PC-3 (cell line): ENCODE measurements at regions of chr1 and their contacts with region 1.

Region 1: DNA sequence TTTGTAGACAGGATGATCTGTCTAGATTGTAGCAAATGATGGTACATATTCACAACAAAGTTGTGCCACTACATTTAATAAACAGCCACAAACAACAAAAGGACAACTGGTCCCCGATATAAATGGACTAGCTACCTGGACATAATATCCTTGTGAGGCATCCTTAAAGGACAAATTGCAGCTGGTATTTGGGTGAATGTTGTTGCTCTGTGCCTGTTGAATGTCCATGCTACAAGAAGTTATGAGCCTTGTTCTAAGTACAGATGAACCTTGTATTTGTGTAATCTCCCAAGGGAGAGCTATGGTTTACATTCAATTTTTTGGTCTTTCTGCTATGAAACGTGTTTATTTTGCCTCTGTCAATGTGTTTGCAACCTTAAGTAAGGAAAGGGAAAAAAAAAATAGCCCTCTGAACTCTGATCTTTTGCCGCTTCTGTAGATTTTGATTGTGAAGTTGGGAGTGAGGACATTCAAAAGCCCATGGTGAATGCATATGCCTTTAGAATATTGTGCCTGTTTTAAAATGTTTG is 26.5 kb downstream of the SFT2D2 start:
- DNase-seq: no peak
- ATAC-seq: no peak
- H3K4me3 ChIP-seq: no peak overlapping the region
- H3K27ac ChIP-seq: no peak overlapping the region
- H3K4me1 ChIP-seq: no peaks in the 10 kb centered on the region
- H3K27me3 ChIP-seq: no peaks in the 10 kb centered on the region
- CTCF ChIP-seq: no peak

Region 2: DNA sequence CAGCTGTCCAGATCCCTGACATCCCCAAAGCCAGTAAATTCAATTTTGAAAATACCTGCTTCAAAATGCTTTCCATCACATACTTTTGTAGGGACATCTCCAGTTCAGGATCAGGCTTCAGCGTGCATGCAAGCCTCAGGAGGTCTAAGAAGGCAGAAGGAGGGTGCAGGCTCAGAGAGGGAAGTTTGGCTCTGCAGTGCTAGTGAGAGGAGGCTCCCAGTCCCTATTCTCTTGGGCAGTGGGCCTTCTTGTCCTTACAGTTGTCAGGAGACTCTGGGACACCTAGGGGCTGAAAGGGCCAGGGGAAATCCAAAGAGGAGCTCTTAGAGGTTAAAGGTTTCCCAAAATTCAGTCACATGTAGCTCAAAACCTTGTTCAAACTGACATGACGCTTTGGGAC is 358.5 kb before region 1 on chr1:
- CTCF ChIA-PET with region 1: no interaction called
- POLR2A ChIA-PET with region 1: interaction called, 37 read pairs
- intact Hi-C with region 1: no loop called
- DNase-seq: no peak
- ATAC-seq: no peak
- H3K4me3 ChIP-seq: no peak overlapping the region
- H3K27ac ChIP-seq: no peak overlapping the region
- H3K4me1 ChIP-seq: no peaks in the 10 kb centered on the region
- H3K27me3 ChIP-seq: no peaks in the 10 kb centered on the region
- CTCF ChIP-seq: no peak